ENCODE measurements at regions of chr18 and their contacts with region 1.

Region 1: GRCh38 chr18:10519999-10520935 is 5.6 kb upstream of the NAPG start:
- DNase-seq: peak; percentile 72
- H3K4me3 ChIP-seq: peak overlapping the region in 1 of 3 experiments; percentile 47
- H3K27ac ChIP-seq: no peak overlapping the region
- H3K4me1 ChIP-seq: peaks cover 15% of the 10 kb centered on the region
- H3K27me3 ChIP-seq: no peaks in the 10 kb centered on the region
- CTCF ChIP-seq: peak; percentile 75 to 95 (median 88)

Region 2: GRCh38 chr18:9992300-9992972 is 527.8 kb before region 1 on chr18:
- dilution Hi-C with region 1: loop called (anchors 10 kb)
- DNase-seq: no peak
- H3K4me3 ChIP-seq: no peak overlapping the region
- H3K27ac ChIP-seq: no peak overlapping the region
- H3K4me1 ChIP-seq: no peaks in the 10 kb centered on the region
- H3K27me3 ChIP-seq: peaks cover 3% of the 10 kb centered on the region
- CTCF ChIP-seq: no peak

Region 3: DNA sequence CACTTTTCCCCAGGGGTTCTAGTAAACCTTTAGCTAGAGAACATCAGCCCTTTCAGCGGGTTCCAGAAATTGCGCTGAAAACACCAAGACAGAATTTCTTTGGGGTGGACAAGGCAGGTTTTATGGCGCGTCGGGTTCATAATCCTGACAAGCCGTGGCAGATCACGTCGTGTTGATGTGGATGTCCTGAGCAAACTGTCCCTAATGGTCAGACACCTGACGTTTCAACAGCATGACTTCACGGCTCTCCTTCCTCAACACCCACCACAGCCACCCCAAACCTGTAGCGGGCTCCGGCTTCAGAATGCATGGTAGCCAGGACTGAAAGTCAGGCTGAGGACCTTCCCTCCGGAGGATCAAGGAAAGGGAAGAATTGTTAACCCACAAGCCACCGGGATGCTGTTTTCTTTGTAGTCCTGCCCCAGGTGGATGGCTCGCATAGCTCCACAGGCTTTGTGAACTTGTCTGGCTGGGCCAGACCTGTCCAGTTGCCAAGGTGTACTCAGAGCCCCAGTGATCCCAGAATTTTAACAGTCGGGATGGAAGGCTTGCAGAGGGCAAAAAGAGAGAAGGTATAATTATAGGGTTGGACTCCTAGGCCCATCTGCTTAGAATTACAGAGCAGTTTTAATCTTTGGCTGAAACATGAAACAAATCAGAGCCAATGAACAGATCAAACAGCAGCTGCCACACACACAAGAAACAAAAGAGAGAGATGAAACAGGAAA is 64.4 kb before region 1 on chr18:
- dilution Hi-C with region 1: no loop called
- DNase-seq: no peak
- H3K4me3 ChIP-seq: peak overlapping the region in 2 of 3 experiments; percentile 50 to 72
- H3K27ac ChIP-seq: no peak overlapping the region
- H3K4me1 ChIP-seq: peaks cover 23% of the 10 kb centered on the region
- H3K27me3 ChIP-seq: peaks cover 16% of the 10 kb centered on the region
- CTCF ChIP-seq: no peak

Measured in keratinocyte (primary cell).